HCT116 (cell line): ENCODE measurements at regions of chr1 and their contacts with region 1.

Region 1: DNA sequence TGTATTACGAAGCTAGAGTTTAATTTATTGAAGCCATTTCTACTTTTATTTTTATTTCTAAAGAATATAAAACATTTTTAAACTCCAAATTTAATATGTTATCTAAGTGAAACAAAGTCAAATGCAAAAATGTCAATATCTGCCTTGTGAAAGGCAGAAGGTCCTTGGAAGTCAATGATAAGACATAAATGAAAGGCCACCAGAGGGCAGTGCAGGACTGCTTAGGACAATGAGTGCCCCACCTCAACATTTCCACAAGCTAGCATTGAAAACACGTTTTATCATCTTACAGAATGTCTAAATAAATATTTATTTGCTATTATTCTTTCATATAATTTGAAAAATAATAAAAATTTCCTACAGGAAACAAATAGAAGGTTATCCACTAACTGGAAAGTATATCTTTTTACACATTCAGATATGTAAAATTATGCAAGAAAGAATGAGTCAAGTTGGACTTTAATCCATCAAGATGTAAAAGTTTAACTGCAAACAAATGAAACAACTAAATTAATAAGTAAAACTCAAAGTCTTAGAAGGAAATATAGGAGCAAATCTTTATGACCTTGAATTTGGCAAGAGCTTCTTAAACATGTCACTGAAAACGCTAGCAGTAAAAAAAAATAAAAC is 140.1 kb upstream of the FMN2 start:
- DNase-seq: peak; percentile 27
- ATAC-seq: no peak
- H3K4me3 ChIP-seq: no peak overlapping the region
- H3K27ac ChIP-seq: no peak overlapping the region
- H3K4me1 ChIP-seq: no peaks in the 10 kb centered on the region
- H3K27me3 ChIP-seq: no peaks in the 10 kb centered on the region
- CTCF ChIP-seq: peak in 2 of 3 experiments; percentile 47 to 52; a peak in 3 of 6 replicates
- POLR2A ChIP-seq: no peak
- RAD21 ChIP-seq: peak; percentile 54

Region 2: DNA sequence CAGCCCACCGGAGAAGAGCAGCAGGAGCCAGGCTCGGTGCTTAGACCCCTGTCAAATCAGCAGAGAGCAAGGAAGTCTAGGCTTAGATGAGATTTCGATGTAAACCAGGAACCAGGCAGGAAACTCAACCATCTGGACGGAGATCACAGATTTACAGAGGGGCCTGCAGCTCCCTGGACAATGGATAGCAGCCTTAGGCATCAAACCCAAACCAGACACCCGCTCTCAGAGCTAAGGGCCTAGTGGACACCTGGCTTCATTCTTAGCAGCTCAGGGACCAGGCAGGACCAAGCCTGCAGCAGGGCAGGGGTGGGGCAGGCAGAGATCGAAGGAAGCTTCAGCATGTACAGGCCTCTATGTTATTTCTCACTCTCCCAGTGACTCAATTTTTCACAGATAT is 12.2 kb after region 1 on chr1:
- CTCF ChIA-PET with region 1: no interaction called
- POLR2A ChIA-PET with region 1: no interaction called
- RAD21 ChIA-PET with region 1: no interaction called
- intact Hi-C with region 1: no loop called
- DNase-seq: no peak
- ATAC-seq: no peak
- H3K4me3 ChIP-seq: no peak overlapping the region
- H3K27ac ChIP-seq: no peak overlapping the region
- H3K4me1 ChIP-seq: no peaks in the 10 kb centered on the region
- H3K27me3 ChIP-seq: no peaks in the 10 kb centered on the region
- CTCF ChIP-seq: no peak
- POLR2A ChIP-seq: no peak
- RAD21 ChIP-seq: no peak

Region 3: GRCh38 chr1:239976130-239976968 is 24.7 kb after region 1 on chr1:
- CTCF ChIA-PET with region 1: interaction called, 6 read pairs
- POLR2A ChIA-PET with region 1: no interaction called
- RAD21 ChIA-PET with region 1: no interaction called
- intact Hi-C with region 1: loop called (anchors 1 kb)
- DNase-seq: peak; percentile 22
- ATAC-seq: peak; percentile 58; the same call in 1 of the 2 replicates
- H3K4me3 ChIP-seq: no peak overlapping the region
- H3K27ac ChIP-seq: no peak overlapping the region
- H3K4me1 ChIP-seq: no peaks in the 10 kb centered on the region
- H3K27me3 ChIP-seq: no peaks in the 10 kb centered on the region
- CTCF ChIP-seq: peak; percentile 21 to 87 (median 85); a peak in 5 of 6 replicates
- POLR2A ChIP-seq: no peak
- RAD21 ChIP-seq: peak; percentile 56

Region 4: GRCh38 chr1:239997515-239998311 is 46.1 kb after region 1 on chr1:
- CTCF ChIA-PET with region 1: no interaction called
- POLR2A ChIA-PET with region 1: no interaction called
- RAD21 ChIA-PET with region 1: no interaction called
- intact Hi-C with region 1: no loop called
- DNase-seq: no peak
- ATAC-seq: no peak
- H3K4me3 ChIP-seq: no peak overlapping the region
- H3K27ac ChIP-seq: no peak overlapping the region
- H3K4me1 ChIP-seq: no peaks in the 10 kb centered on the region
- H3K27me3 ChIP-seq: no peaks in the 10 kb centered on the region
- CTCF ChIP-seq: no peak
- POLR2A ChIP-seq: no peak
- RAD21 ChIP-seq: no peak